A673 (cell line): ENCODE measurements at regions of chr6 and their contacts with region 1.

Region 1: DNA sequence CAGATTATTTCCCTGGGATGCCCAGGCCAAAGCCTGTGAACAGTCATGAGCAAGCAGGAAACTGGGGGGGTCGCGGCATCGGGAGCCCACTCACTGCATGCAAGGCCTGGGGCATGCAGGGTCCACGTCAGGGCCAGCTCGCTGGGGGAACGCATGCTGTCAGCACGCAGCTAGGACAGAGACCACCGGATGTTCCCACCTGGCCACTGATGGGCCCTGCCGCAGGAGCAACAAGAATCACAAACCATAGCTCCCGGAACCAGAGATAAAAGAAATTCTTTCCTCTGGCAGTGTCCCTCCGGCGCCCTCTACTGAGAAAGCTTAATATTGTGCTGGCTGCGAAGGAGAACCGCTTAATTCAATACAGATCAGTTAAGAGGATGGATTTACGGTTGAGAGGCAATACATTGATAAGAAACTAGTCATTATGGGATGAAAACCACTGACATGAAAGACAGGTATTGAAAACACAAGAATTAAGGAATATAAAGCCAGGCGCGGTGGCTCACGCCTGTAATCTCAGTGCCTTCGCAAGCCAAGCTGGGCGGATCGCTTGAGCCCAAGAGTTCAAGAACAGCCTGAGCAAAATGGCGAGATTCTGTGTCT is 32.6 kb downstream of the C6orf15 start:
- DNase-seq: peak; percentile 82
- H3K4me3 ChIP-seq: no peak overlapping the region
- H3K27ac ChIP-seq: no peak overlapping the region
- H3K4me1 ChIP-seq: peaks cover 8% of the 10 kb centered on the region
- H3K27me3 ChIP-seq: no peaks in the 10 kb centered on the region
- CTCF ChIP-seq: peak; percentile 91

Region 2: DNA sequence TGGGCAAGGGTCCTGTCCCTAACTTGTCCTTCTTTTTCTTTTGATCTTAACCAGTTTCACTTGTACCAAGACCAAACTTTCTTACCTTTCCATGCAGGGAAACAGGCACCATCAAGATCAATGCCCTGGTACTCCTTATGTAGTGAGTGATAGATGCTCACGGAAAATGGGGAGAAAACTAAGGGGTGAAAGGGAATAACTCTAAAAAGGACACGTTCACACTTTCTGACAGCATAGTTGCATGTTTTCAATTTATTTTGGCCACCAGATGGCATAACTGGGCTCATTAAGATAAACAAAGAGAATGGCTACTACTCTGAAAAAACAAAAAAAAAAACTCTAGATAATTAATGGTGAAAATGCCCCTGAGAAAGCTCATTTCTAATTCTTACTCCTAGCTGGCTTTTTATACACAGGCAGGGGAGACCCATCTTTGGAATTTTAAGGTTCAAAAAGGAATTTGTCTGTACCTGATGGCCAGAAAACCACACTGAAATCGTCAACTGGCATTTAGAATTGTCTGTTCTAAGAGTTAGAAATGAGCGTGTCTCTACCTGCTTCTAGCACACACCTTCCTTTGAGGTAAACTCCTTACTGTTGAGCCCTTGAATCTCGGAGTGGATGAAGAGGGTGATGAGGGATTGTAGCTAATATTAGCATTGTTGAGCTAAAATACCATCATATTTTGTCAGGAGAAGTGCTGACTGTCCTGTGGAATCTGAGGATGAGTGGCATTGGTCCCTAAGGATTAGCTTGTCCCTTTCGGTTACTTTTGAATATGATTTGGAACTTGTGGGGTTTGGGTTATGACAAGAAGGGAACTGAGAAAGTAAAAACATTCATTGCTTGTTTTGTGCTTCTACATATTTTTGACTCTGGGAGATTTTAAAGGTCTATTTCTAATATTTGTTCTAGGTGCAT is 257.6 kb before region 1 on chr6:
- CTCF ChIA-PET with region 1: interaction called, 17 read pairs
- POLR2A ChIA-PET with region 1: no interaction called
- intact Hi-C with region 1: loop called (anchors 5 kb)
- DNase-seq: peak; percentile 66
- H3K4me3 ChIP-seq: no peak overlapping the region
- H3K27ac ChIP-seq: peak overlapping the region; percentile 7
- H3K4me1 ChIP-seq: peaks cover 22% of the 10 kb centered on the region
- H3K27me3 ChIP-seq: no peaks in the 10 kb centered on the region
- CTCF ChIP-seq: peak; percentile 61

Region 3: DNA sequence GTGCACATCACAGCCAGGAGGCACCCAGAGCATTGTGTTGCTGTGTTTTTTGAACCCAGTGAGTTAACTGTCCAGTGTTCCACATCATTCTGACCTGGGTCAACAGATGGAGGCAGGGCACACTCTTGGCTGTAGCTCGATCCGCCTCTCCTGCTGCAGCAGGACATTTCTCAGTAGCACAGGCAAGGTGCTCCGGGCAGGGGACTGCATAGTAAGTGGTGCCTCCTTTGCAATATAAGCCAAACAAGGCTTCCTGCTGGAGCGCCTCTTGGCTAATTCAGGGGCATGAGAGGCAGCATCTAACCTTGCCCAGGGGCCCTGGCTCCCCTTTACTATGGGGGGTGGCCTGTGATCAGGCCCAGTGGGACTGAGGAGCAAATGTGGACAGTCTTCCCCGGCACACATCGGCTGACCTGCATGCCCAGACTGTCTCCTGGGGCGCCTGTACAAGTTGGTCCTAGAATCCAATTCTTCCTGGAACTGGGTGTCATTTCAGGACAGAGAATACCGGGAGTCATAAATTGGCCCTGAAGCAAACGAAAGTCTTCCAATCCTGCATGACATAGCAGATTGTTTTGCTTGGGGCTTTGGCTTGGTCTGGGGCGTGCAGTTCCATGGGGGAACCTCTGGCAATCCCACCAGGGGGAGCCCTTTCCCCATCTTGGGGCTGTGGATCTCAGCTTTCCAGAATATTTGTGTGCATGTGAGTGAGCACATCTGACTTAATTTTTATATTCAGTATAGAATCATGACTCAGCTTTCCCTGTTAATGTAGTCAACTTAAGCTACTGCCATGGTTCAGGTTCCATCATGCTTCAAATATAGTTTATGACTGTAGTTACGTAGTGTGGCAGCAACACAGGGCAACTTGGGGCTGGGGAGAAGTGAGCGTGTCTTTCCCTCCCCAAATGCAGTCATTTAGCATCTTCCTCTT is 251.5 kb before region 1 on chr6:
- CTCF ChIA-PET with region 1: interaction called, 17 read pairs
- POLR2A ChIA-PET with region 1: no interaction called
- intact Hi-C with region 1: loop called (anchors 5 kb)
- DNase-seq: peak; percentile 90
- H3K4me3 ChIP-seq: no peak overlapping the region
- H3K27ac ChIP-seq: peak overlapping the region; percentile 40
- H3K4me1 ChIP-seq: peaks cover 5% of the 10 kb centered on the region
- H3K27me3 ChIP-seq: no peaks in the 10 kb centered on the region
- CTCF ChIP-seq: peak; percentile 96

Region 4: DNA sequence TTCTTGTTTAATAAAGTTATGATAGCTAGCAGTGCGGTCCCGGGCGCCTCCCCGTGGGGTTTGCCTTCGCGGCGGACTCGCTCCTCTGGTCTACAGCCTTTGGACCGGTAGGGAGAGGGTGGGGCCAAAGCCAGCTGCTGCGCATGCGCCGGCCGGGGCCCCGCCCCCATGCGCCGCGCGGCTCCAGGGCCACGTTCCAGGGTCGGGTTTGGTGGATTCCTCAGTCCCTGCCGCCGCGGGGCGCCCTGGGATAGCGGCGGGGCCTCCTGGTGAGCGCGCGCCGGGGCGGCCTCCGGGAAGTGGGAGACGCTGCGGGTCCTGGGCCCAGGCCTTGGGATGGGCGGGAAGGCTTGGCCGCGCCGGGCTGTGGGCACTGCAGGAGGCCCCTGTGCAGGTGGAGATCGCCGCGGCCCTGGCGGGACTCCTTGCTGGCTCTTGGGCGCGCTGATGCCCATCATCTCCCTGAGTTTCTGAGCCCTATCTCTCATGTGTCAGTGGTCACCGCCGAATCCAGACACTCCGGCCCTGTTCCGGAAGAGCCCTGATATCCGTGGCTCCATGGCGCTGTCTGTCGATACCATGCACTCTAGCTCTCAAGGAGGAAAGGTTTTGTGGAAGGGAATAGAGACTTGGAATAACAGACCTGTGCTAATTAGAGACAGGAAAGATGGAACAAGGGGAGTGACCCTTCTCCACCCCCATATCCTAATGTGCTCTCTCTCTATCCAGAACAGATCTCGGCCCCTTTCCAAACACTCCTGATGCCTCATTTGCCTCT is 165.5 kb before region 1 on chr6 and contains the start of gene VARS2:
- CTCF ChIA-PET with region 1: interaction called, 23 read pairs
- POLR2A ChIA-PET with region 1: no interaction called
- intact Hi-C with region 1: no loop called
- DNase-seq: peak; percentile 89
- H3K4me3 ChIP-seq: peak within 1 kb of the TSS; percentile 62
- H3K27ac ChIP-seq: peak within 1 kb of the TSS; percentile 75
- H3K4me1 ChIP-seq: peaks cover 13% of the 10 kb centered on the region
- H3K27me3 ChIP-seq: no peaks in the 10 kb centered on the region
- CTCF ChIP-seq: peak; percentile 40
- total RNA-seq, gene VARS2: 48.4 and 53.4 TPM in 2 replicates

Region 5: DNA sequence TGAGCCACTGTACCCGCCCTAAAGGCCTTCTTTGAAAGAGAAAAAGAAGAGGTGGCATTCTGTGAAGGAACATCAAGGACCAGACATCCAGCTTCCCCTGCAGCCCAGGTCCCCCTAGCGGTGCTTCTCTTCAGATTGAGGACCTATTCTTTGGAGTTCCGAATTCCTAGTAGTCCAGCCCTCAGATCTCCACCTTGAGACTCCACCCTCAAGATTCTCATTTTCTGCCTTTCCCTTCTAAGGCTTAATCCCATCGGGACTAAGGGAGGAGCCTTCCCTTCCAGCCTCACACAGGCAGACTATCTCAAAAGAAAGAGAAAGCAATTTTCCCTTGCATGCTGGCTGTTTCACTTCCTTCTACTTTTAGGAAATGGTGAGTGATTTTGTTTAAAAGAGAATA is 37.0 kb before region 1 on chr6:
- CTCF ChIA-PET with region 1: interaction called, 11 read pairs
- POLR2A ChIA-PET with region 1: no interaction called
- intact Hi-C with region 1: no loop called
- DNase-seq: peak; percentile 88
- H3K4me3 ChIP-seq: no peak overlapping the region
- H3K27ac ChIP-seq: no peak overlapping the region
- H3K4me1 ChIP-seq: no peaks in the 10 kb centered on the region
- H3K27me3 ChIP-seq: no peaks in the 10 kb centered on the region
- CTCF ChIP-seq: peak; percentile 76

Region 6: DNA sequence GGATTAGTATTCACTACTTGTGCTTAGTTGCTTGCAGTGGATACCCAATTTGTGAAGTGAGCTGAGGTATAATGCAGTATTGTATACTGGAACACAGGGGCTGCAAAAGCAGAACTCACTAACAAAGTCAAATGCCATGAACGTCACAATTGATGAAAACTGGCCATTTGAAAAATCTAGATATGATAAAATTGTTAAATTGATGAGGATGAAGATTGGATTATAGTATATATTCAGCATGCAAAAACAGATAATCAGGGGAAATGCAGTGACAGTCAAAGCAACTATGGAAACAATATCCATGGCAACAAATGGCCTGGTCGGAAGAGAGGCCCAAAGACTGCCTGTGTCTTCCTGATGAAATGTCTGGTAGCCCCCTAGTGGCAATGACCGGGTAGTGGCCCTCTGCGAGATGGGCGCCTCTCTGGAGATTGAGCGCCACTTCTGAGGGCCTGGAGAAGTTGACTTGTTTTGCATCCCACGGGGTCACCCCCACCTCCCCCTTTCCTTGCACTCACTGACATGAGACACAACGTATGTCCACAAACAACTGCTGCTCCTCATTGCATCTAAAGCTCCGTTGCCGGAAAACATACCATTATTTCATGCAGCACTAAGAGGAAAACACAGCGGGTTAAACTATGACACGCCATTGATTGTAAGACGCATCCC is 11.0 kb before region 1 on chr6:
- CTCF ChIA-PET with region 1: interaction called, 11 read pairs
- POLR2A ChIA-PET with region 1: no interaction called
- intact Hi-C with region 1: no loop called
- DNase-seq: peak; percentile 88
- H3K4me3 ChIP-seq: no peak overlapping the region
- H3K27ac ChIP-seq: no peak overlapping the region
- H3K4me1 ChIP-seq: peaks cover 9% of the 10 kb centered on the region
- H3K27me3 ChIP-seq: no peaks in the 10 kb centered on the region
- CTCF ChIP-seq: peak; percentile 93